Transverse colon (tissue), 4 donors: ENCODE measurements at regions of chr7 and their contacts with region 1.

Region 1: GRCh38 chr7:141663081-141663849 is 38.7 kb downstream of the DENND11 start:
- DNase-seq: peak; percentile 77
- H3K4me3 ChIP-seq: no peak overlapping the region
- H3K27ac ChIP-seq: peak overlapping the region; percentile 63 to 80 (median 75)
- H3K4me1 ChIP-seq: peaks cover 8 to 28% (median 26%) of the 10 kb centered on the region in 4 donors
- H3K27me3 ChIP-seq: no peaks in the 10 kb centered on the region
- CTCF ChIP-seq: no peak
- EP300 ChIP-seq: no peak
- POLR2A ChIP-seq: no peak

Region 2: DNA sequence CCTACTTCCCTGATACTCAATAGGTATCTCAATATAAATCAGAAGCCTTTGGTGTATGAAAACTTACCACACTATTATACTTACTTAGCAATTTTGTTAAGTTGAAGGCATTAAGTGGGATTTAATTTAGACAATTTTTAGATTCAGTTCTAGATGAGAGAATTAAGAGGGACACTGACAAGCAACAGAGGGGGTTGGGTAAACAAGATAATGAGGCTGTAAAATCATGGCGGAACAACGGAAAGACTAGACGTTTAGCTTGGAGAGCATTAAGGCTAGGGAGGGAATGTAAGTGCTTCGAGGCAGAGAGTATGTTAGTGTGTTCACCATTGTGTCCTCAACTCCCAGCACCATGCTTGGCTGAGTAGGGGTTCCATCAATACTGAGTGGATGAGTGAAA is 32.6 kb before region 1 on chr7:
- in situ Hi-C with region 1: no loop called
- intact Hi-C with region 1: no loop called
- DNase-seq: no peak
- H3K4me3 ChIP-seq: no peak overlapping the region
- H3K27ac ChIP-seq: no peak overlapping the region
- H3K4me1 ChIP-seq: no peaks in the 10 kb centered on the region
- H3K27me3 ChIP-seq: no peaks in the 10 kb centered on the region
- CTCF ChIP-seq: no peak
- EP300 ChIP-seq: no peak
- POLR2A ChIP-seq: no peak

Region 3: DNA sequence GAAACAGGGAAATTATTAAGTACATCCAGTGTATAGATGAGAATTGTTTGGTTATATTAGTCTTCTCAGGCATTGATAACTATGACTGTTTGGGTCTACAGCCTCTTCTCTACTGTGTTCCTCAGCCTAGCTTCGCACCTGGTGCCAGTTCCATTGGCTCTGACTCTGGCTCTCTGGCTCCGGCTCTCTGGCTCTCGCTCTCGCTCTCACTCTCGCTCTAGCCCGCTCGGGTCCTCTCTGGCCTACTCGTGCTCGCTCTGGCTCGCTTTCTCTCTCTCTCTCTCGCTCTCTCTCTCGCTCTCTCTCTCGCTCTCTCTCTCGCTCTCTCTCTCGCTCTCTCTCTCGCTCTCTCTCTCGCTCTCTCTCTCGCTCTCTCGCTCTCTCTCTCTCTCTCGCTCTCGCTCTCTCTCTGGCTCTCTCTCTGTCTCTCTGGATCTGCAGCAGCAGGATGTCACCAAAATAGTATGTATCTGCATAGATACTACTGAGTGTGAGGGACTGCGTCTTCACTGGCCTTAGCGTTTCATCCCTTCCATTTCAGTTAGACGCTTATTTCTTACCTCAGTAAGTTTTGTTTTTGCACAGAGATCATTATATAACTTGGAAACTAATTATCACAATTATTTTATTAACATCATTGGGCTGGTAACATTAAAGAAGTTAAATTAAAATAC is 68.3 kb after region 1 on chr7:
- in situ Hi-C with region 1: no loop called
- intact Hi-C with region 1: no loop called
- DNase-seq: no peak
- H3K4me3 ChIP-seq: no peak overlapping the region
- H3K27ac ChIP-seq: no peak overlapping the region
- H3K4me1 ChIP-seq: no peaks in the 10 kb centered on the region
- H3K27me3 ChIP-seq: no peaks in the 10 kb centered on the region
- CTCF ChIP-seq: peak in 1 of 5 experiments; percentile 15
- EP300 ChIP-seq: no peak
- POLR2A ChIP-seq: no peak

Region 4: DNA sequence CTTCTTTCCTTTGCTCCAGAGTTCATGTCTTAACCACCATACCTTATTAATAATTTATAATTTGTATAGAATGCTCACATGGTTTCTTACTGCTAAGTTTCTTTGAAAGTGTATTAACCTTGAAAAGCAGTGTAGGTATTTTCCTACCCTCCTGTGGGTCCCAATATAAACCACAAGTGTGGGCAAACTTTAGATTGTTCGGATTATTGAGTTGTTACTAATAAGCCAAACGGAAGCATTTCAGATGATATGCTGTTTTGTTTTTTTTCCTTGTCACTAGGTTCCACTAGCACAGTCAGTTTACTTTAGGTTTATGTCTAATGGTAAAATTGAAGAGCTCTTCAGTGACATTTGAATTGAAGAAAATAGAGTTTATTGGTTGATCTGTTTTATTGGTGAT is 85.1 kb after region 1 on chr7:
- in situ Hi-C with region 1: loop called in 1 of 4 experiments (anchors 10 kb)
- intact Hi-C with region 1: no loop called
- DNase-seq: no peak
- H3K4me3 ChIP-seq: no peak overlapping the region
- H3K27ac ChIP-seq: no peak overlapping the region
- H3K4me1 ChIP-seq: no peaks in the 10 kb centered on the region
- H3K27me3 ChIP-seq: no peaks in the 10 kb centered on the region
- CTCF ChIP-seq: no peak
- EP300 ChIP-seq: no peak
- POLR2A ChIP-seq: no peak

Region 5: DNA sequence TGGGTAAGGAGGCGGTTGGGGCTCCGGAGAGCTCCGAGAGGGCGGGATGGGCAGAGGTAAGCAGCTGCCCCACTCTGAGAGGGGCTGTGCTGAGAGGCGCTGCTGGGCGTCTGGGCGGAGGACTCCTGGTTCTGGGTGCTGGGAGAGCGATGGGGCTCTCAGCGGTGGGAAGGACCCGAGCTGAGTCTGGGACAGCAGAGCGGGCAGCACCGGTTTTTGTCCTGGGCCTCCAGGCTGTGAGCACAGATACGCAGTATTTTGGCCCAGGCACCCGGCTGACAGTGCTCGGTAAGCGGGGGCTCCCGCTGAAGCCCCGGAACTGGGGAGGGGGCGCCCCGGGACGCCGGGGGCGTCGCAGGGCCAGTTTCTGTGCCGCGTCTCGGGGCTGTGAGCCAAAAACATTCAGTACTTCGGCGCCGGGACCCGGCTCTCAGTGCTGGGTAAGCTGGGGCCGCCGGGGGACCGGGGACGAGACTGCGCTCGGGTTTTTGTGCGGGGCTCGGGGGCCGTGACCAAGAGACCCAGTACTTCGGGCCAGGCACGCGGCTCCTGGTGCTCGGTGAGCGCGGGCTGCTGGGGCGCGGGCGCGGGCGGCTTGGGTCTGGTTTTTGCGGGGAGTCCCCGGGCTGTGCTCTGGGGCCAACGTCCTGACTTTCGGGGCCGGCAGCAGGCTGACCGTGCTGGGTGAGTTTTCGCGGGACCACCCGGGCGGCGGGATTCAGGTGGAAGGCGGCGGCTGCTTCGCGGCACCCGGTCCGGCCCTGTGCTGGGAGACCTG is 1133.5 kb after region 1 on chr7:
- in situ Hi-C with region 1: no loop called
- intact Hi-C with region 1: no loop called
- DNase-seq: no peak
- H3K4me3 ChIP-seq: peak overlapping the region; percentile 4 to 44 (median 18)
- H3K27ac ChIP-seq: peak overlapping the region; percentile 46 to 73 (median 62)
- H3K4me1 ChIP-seq: peaks cover 0 to 17% (median 8%) of the 10 kb centered on the region in 4 donors
- H3K27me3 ChIP-seq: peaks cover 59% of the 10 kb centered on the region
- CTCF ChIP-seq: no peak
- EP300 ChIP-seq: no peak
- POLR2A ChIP-seq: no peak